Vagina (tissue), 2 donors: ENCODE measurements at regions of chr5 and their contacts with region 1.

Region 1: GRCh38 chr5:39074016-39074886 is at the start of gene RICTOR:
- DNase-seq: no peak
- H3K4me3 ChIP-seq: peak within 1 kb of the TSS; percentile 91 to 96
- H3K27ac ChIP-seq: peak within 1 kb of the TSS; percentile 99
- H3K4me1 ChIP-seq: peaks cover 28% of the 10 kb centered on the region
- H3K27me3 ChIP-seq: no peaks in the 10 kb centered on the region
- CTCF ChIP-seq: peak in 1 of 3 experiments; percentile 4
- POLR2A ChIP-seq: peak in 1 of 2 donors; percentile 46
- total RNA-seq, gene RICTOR: 39.3 TPM

Region 2: GRCh38 chr5:38441453-38442246 is 632.6 kb before region 1 on chr5:
- intact Hi-C with region 1: loop called (anchors 10 kb)
- DNase-seq: no peak
- H3K4me3 ChIP-seq: no peak overlapping the region
- H3K27ac ChIP-seq: no peak overlapping the region
- H3K4me1 ChIP-seq: no peaks in the 10 kb centered on the region
- H3K27me3 ChIP-seq: no peaks in the 10 kb centered on the region
- CTCF ChIP-seq: peak; percentile 85 to 96 (median 91)
- POLR2A ChIP-seq: no peak

Region 3: DNA sequence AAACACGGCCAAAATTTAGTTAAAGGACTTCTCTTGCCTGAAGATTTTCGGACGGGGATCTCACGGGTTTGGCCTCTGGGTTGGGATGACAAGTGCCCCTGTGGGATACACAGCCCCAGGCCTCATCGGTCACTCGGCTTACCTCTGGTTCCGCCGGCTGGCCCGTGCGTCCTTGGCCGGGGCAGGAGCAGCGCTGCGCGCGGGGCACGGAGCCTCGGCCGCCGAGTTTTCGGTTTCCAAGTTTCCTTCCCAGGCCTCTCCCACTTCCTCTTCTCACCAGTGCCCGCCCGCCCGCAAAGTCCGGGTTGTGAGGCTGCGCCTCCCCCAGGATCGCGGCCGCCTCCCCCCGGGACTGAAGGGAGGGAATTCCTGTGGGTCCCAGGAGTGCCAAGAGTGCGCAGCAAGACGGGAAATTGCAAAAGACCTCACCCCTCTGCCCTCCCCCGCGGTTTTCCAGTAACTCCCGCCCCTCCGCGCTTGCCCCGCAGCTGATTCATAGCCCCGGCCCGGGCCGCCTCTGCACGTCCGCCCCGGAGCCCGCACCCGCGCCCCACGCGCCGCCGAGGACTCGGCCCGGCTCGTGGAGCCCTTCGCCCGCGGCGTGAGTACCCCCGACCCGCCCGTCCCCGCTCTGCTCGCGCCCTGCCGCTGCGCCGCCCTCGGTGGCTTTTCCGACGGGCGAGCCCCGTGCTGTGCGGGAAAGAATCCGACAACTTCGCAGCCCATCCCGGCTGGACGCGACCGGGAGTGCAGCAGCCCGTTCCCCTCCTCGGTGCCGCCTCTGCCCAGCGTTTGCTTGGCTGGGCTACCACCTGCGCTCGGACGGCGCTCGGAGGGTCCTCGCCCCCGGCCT is 228.5 kb before region 1 on chr5 and contains the start of gene OSMR:
- intact Hi-C with region 1: loop called (anchors 10 kb)
- DNase-seq: peak in 1 of 2 donors; percentile 98
- H3K4me3 ChIP-seq: peak within 1 kb of the TSS; percentile 73 to 92
- H3K27ac ChIP-seq: peak within 1 kb of the TSS; percentile 92
- H3K4me1 ChIP-seq: peaks cover 34% of the 10 kb centered on the region
- H3K27me3 ChIP-seq: no peaks in the 10 kb centered on the region
- CTCF ChIP-seq: peak in 1 of 3 experiments; percentile 1
- POLR2A ChIP-seq: peak in 1 of 2 donors; percentile 86
- total RNA-seq, gene OSMR: 69.0 TPM

Region 4: DNA sequence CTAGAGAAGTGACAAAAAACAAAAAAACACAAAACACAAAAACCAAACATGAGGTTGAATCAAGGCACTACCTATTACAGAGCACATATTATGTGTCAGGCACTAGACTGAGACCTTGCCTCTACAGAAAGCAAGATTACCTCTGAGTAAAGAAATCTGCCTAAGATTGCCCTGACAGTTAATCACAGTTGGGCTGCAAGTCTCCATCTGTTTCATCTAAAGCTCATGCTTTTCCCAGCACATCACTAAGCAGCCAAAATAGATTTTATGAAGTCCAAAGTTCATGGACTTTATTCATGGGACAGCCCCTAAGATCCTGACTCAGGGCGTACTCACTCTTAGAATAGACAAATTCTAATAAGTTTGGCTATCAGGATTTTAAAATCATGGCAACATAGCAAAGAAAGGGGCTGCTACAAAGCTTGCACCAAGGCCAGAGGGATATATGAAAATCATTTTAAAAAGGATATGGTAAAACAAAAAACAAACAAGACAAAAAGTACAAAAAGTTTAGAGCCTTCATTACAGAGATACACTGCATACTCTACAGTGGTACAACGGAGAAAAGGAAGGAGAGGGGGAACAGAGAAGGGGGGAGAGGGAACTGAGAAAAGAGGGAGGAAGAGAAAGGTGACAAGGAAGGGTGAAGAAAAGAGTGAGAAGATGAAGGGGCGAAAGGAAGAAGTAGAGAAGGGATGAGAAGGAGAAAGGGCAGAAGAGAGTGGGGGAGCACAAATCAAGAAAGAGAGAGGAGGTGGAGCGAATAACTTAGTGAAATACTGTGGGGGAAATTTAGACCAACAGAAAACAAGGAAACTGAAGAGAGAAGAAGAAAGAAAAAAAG is 58.3 kb before region 1 on chr5:
- intact Hi-C with region 1: loop called (anchors 10 kb)
- DNase-seq: no peak
- H3K4me3 ChIP-seq: no peak overlapping the region
- H3K27ac ChIP-seq: peak overlapping the region; percentile 60
- H3K4me1 ChIP-seq: peaks cover 26% of the 10 kb centered on the region
- H3K27me3 ChIP-seq: no peaks in the 10 kb centered on the region
- CTCF ChIP-seq: no peak
- POLR2A ChIP-seq: no peak